ENCODE measurements at regions of chr1 and their contacts with region 1.

Region 1: DNA sequence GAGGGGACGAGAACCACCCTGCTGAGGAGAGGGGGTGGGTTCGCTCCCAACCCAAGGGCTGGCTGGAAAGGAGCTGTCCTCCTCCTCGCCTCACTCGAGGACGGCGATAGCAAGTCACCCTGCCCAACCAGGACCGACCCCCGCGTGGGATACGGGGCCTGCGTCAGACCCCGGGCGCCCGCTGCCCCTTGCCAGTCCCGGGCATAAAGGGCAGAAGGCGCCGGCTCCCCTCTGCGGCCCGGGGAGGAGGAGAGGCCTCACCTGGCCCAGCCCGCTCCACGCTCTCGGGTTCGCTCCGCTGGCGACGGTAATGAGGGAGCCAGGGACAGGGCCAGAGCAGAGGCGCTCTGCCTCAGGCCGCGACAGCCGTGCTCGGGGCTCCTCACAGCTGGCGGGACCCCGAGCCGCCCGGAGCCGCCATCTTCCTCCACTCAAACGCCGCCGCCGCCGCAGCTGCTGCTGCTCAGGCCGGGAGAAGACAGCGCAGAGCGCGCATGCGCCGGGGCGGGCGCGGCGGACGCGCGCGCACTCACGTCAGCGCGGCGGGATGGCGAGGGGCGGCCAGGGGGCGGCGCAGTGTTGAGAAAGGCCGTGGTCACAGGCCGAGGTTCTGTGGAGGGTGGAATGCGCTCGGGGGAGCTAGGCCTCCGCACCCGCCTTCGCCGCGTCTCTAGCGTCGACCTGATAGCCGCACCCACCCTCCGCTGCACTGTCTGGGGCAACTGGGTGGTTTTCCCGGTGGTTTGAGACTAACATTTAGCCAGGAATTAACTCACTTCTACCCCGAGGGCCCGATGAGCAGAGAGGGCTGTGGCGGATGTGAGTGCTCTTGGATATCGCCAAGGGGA is at the start of gene FBXO42:
- DNase-seq: peak; percentile 95
- ATAC-seq: peak; percentile 92
- H3K4me3 Mint-ChIP-seq: peak within 1 kb of the TSS; percentile 96
- H3K27ac Mint-ChIP-seq: peak within 1 kb of the TSS; percentile 96
- H3K4me1 Mint-ChIP-seq: peaks cover 31% of the 10 kb centered on the region
- H3K27me3 Mint-ChIP-seq: no peaks in the 10 kb centered on the region
- total RNA-seq, gene FBXO42: 14.3 to 18.1 TPM

Region 2: GRCh38 chr1:16217061-16217785 is 135.0 kb before region 1 on chr1:
- CTCF ChIA-PET with region 1: no interaction called
- POLR2A ChIA-PET with region 1: no interaction called
- intact Hi-C with region 1: loop called in 1 of 2 experiments (anchors 2 kb)
- DNase-seq: peak; percentile 98
- ATAC-seq: peak; percentile 98
- H3K4me3 Mint-ChIP-seq: peak overlapping the region; percentile 73
- H3K27ac Mint-ChIP-seq: peak overlapping the region; percentile 20
- H3K4me1 Mint-ChIP-seq: peaks cover 20% of the 10 kb centered on the region
- H3K27me3 Mint-ChIP-seq: no peaks in the 10 kb centered on the region

Region 3: GRCh38 chr1:16236511-16237342 is 115.5 kb before region 1 on chr1 and contains the start of gene CPLANE2:
- CTCF ChIA-PET with region 1: no interaction called
- POLR2A ChIA-PET with region 1: no interaction called
- intact Hi-C with region 1: loop called in 1 of 2 experiments (anchors 1 kb)
- DNase-seq: peak; percentile 98
- ATAC-seq: peak; percentile 85
- H3K4me3 Mint-ChIP-seq: peak within 1 kb of the TSS; percentile 81
- H3K27ac Mint-ChIP-seq: peak within 1 kb of the TSS; percentile 85
- H3K4me1 Mint-ChIP-seq: peaks cover 23% of the 10 kb centered on the region
- H3K27me3 Mint-ChIP-seq: no peaks in the 10 kb centered on the region
- total RNA-seq, gene CPLANE2: 2.4 to 3.7 TPM

Region 4: GRCh38 chr1:16498573-16499413 is 146.6 kb after region 1 on chr1:
- CTCF ChIA-PET with region 1: interaction called, 3 read pairs
- POLR2A ChIA-PET with region 1: no interaction called
- intact Hi-C with region 1: loop called in 1 of 2 experiments (anchors 1 kb)
- DNase-seq: peak; percentile 91
- ATAC-seq: peak; percentile 94
- H3K4me3 Mint-ChIP-seq: peak overlapping the region; percentile 74
- H3K27ac Mint-ChIP-seq: no peak overlapping the region
- H3K4me1 Mint-ChIP-seq: peaks cover 10% of the 10 kb centered on the region
- H3K27me3 Mint-ChIP-seq: no peaks in the 10 kb centered on the region

Region 5: GRCh38 chr1:17861685-17862084 is 1509.5 kb after region 1 on chr1:
- CTCF ChIA-PET with region 1: no interaction called
- POLR2A ChIA-PET with region 1: no interaction called
- intact Hi-C with region 1: no loop called
- DNase-seq: no peak
- ATAC-seq: no peak
- H3K4me3 Mint-ChIP-seq: no peak overlapping the region
- H3K27ac Mint-ChIP-seq: no peak overlapping the region
- H3K4me1 Mint-ChIP-seq: no peaks in the 10 kb centered on the region
- H3K27me3 Mint-ChIP-seq: peaks cover 5% of the 10 kb centered on the region